ENCODE measurements at regions of chr9 and their contacts with region 1.

Region 1: DNA sequence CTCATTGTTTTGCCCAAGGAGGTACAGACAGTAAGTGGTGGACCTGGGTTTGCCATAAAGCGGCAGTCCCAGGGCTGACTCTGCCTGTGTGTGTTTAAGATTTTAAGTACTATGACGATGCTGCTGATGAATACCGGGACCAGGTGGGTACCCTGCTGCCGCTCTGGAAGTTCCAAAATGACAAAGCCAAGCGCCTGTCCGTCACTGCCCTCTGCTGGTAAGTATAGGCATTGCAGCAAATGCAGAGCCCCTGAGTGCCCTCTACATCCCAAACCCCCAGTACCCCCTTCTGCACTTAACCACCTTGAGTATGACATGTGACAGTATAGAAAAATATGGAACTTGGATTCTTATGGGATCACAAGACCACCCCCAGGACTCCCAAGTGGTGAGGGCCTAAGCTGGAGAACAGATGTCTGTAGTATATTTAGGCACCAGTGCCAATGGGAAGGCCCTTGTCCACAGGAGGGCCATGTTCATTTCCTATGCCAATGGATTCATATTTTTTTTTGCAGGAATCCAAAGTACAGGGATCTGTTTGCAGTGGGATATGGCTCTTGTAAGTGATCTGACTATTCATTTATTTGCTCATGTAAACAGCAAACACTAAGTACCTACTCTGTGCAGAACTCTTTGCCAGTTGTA is 22.0 kb downstream of the ENHO start:
- DNase-seq: peak; percentile 47
- ATAC-seq: peak in 1 of 2 donors; percentile 53

Region 2: GRCh38 chr9:34332076-34332964 is 168.4 kb before region 1 on chr9:
- intact Hi-C with region 1: loop called in 1 of 2 experiments (anchors 10 kb)
- DNase-seq: no peak
- ATAC-seq: no peak

Region 3: GRCh38 chr9:34403554-34404380 is 97.0 kb before region 1 on chr9:
- intact Hi-C with region 1: loop called (anchors 2 to 5 kb)
- DNase-seq: peak; percentile 57
- ATAC-seq: peak; percentile 54 to 71

Region 4: GRCh38 chr9:34417734-34418133 is 83.0 kb before region 1 on chr9:
- intact Hi-C with region 1: loop called in 1 of 2 experiments (anchors 5 kb)
- DNase-seq: no peak
- ATAC-seq: no peak

Region 5: DNA sequence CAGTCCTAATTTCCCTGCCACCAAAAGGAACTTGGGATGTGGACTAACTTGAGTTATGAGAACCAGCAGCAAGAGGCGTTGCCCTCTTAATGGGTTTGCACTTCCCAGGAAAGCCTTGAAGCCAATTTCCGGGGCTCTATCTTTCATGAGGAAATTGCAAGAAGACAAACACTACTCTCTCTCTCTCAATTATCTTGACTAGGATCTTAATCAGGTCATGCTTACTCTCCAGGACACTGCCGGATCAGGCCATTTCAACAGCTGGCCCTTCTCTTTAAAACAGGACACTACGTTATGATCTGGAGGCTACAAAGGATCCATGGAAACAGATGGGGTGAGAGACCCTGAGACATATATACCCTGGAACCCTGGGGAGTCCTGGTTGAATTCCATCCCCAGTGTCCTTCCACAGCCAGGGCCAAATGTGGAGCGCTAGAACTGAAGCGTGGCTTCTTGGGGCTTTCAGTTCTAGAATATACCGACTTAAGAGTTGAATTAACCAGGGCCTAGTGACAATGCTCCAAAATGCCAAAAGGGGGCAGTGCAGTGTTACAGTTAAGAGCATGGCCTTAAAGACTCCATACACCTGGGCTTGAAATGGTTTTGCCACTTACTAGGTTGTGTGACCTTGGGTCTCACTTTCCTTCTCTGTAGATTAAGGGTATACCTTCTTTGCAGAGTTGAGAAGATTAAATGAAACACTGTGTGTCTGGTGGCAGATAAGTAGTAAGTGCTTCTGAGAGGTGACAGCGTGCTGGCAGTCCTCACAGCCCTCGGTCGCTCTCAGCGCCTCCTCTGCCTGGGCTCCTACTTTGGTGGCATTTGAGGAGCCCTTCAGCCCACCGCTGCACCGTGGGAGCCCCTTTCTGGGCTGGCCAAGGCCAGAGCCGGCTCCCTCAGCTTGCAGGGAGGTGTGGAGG is 63.5 kb before region 1 on chr9:
- intact Hi-C with region 1: loop called (anchors 2 to 5 kb)
- DNase-seq: peak; percentile 31
- ATAC-seq: peak; percentile 81 to 86

Region 6: GRCh38 chr9:34591248-34591916 is 90.6 kb after region 1 on chr9:
- intact Hi-C with region 1: loop called in 1 of 2 experiments (anchors 5 kb)
- DNase-seq: peak; percentile 90
- ATAC-seq: peak; percentile 67 to 88

Measured in left cardiac atrium (tissue), 4 donors.